Activated B cell treated with CpG ODN at 0.5 μM for 24 hours (primary cell): ENCODE measurements at regions of chr19 and their contacts with region 1.

Region 1: GRCh38 chr19:19138169-19138981 is at the start of gene TMEM161A:
- DNase-seq: peak; percentile 90
- ATAC-seq: peak; percentile 99
- H3K4me3 Mint-ChIP-seq: peak within 1 kb of the TSS; percentile 98
- H3K27ac Mint-ChIP-seq: peak within 1 kb of the TSS; percentile 90
- H3K4me1 Mint-ChIP-seq: peaks cover 30% of the 10 kb centered on the region
- H3K27me3 Mint-ChIP-seq: no peaks in the 10 kb centered on the region
- CTCF ChIP-seq: no peak
- total RNA-seq, gene TMEM161A: 20.8 and 22.6 TPM in 2 replicates

Region 2: GRCh38 chr19:18469069-18469846 is 669.1 kb before region 1 on chr19:
- CTCF ChIA-PET with region 1: no interaction called
- POLR2A ChIA-PET with region 1: no interaction called
- intact Hi-C with region 1: loop called (anchors 10 kb)
- DNase-seq: peak; percentile 44
- ATAC-seq: peak; percentile 48
- H3K4me3 Mint-ChIP-seq: no peak overlapping the region
- H3K27ac Mint-ChIP-seq: no peak overlapping the region
- H3K4me1 Mint-ChIP-seq: peaks cover 5% of the 10 kb centered on the region
- H3K27me3 Mint-ChIP-seq: no peaks in the 10 kb centered on the region
- CTCF ChIP-seq: no peak

Region 3: DNA sequence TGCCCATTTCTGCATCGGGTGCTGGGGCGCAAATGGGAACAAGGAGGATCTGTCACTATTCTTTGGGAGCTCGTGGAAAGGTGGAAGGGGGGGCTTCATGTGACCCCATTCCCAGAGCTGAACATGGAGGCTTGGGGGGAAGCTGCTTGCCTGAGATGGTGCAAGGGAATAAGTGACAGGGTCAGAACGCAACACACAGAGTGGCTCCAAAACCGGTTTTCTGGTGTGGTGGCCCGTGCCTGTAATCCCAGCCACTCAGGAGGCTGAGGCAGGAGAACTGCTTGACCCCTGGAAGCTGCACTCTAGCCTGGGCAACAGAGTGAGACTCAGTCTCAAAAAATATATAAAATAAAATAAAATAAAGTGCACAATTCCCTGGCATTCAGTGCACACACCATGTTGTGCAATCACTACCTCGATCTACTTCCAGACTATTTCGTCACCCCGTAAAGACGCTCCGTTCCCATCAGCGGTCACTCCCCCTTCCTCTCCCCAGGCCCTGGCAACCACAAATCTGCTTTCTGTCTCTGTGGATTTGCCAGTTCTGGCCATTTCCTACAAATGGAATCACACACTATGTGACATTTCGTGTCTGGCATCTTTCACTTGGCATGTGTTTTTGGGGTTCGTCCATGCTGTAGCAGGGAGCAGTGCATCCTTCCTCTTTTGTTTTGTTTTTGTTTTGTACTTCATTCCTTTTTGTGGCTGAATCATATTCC is 329.1 kb before region 1 on chr19:
- CTCF ChIA-PET with region 1: no interaction called
- POLR2A ChIA-PET with region 1: no interaction called
- intact Hi-C with region 1: no loop called
- DNase-seq: no peak
- ATAC-seq: no peak
- H3K4me3 Mint-ChIP-seq: no peak overlapping the region
- H3K27ac Mint-ChIP-seq: no peak overlapping the region
- H3K4me1 Mint-ChIP-seq: peaks cover 2% of the 10 kb centered on the region
- H3K27me3 Mint-ChIP-seq: peaks cover 9% of the 10 kb centered on the region
- CTCF ChIP-seq: no peak

Region 4: DNA sequence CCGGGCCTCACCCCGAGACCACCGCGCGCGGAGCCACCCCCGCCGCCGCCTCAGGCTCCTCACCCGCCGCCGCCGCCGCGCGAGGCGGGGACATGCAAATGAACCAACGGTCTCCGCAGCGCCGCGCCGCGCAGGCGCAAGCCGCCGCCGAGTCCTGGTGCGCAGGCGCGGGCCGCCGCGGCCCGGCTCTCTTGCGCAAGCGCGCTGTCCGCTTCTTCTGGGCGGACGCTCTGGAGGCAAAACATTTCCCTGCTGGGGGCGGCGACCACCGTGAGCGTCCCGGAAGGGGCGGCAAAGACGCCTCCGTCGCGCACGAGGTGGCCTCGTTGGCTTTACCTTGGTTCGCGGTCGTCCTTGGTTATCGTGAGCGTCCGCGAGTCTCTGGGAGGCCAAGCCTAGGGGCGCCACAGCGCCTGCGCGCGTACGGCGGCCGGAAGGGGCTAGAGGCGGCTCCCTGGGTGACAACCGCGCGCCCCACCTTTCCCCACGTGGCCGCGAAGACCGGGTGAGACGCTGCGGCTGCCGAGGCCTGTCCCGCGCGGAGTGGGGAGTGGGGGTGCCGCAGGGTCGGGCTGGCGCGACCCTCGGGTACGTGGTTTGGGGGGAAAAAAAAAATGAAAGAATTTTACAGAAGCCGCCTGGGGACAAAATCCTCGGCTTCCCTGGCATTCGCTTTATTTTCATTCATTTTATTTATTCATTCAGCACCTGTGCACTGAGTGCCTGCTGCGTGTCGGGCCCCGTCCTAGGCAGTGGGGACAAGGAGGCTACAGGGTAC is 104.8 kb before region 1 on chr19 and contains the starts of genes ARMC6 and SUGP2:
- CTCF ChIA-PET with region 1: no interaction called
- POLR2A ChIA-PET with region 1: no interaction called
- intact Hi-C with region 1: loop called (anchors 1 kb)
- DNase-seq: peak; percentile 94
- ATAC-seq: peak; percentile 76
- H3K4me3 Mint-ChIP-seq: peak within 1 kb of the TSS; percentile 92
- H3K27ac Mint-ChIP-seq: peak within 1 kb of the TSS; percentile 91
- H3K4me1 Mint-ChIP-seq: peaks cover 31% of the 10 kb centered on the region
- H3K27me3 Mint-ChIP-seq: no peaks in the 10 kb centered on the region
- CTCF ChIP-seq: no peak
- total RNA-seq, gene ARMC6: 33.3 and 37.9 TPM in 2 replicates
- total RNA-seq, gene SUGP2: 121 and 122 TPM in 2 replicates

Region 5: GRCh38 chr19:19192078-19192882 is 53.9 kb after region 1 on chr19 and contains the starts of genes BORCS8 and RFXANK:
- CTCF ChIA-PET with region 1: no interaction called
- POLR2A ChIA-PET with region 1: no interaction called
- intact Hi-C with region 1: loop called (anchors 1 kb)
- DNase-seq: peak; percentile 91
- ATAC-seq: peak; percentile 85
- H3K4me3 Mint-ChIP-seq: peak within 1 kb of the TSS; percentile 99
- H3K27ac Mint-ChIP-seq: peak within 1 kb of the TSS; percentile 99
- H3K4me1 Mint-ChIP-seq: peaks cover 49% of the 10 kb centered on the region
- H3K27me3 Mint-ChIP-seq: no peaks in the 10 kb centered on the region
- CTCF ChIP-seq: no peak
- total RNA-seq, gene BORCS8: 51.8 and 52.3 TPM in 2 replicates
- total RNA-seq, gene RFXANK: 95.4 and 96.9 TPM in 2 replicates